PC-9 (cell line): ENCODE measurements at regions of chr12 and their contacts with region 1.

Region 1: GRCh38 chr12:53508534-53509199 is 1.4 kb upstream of the NPFF start:
- DNase-seq: peak; percentile 51 to 81
- H3K4me3 ChIP-seq: no peak overlapping the region
- H3K27ac ChIP-seq: no peak overlapping the region
- H3K4me1 ChIP-seq: no peaks in the 10 kb centered on the region
- H3K27me3 ChIP-seq: no peaks in the 10 kb centered on the region
- CTCF ChIP-seq: peak; percentile 90

Region 2: DNA sequence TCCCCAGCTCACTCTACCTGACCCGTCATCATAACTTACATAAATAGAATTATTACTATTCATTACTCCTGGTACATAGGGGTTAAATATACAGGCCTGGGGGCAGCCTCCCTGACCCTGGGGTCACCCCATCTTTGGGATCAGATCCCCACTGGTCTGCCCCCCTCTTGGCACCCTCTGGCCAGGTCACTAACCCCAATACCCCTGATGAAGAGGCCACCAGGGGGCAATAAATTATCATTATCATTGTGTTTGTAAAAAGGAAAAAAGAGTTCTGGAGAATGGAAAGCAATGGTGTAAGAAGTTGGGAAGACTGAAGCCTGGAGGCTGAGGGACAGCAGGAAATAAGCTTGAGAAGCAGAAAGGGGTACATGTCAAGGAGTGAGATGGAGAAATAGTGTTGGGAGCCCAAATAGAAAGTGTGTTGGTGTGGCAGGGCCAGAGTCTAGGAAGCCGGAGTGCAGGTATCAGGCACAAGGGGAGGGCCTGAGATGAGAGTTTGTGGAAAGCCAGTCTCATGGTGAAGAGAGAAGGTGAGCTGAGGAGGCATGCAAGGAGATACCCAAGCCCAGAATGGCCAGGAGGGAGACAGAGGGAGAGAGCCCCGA is 181.1 kb before region 1 on chr12:
- CTCF ChIA-PET with region 1: interaction called, 3 read pairs
- POLR2A ChIA-PET with region 1: no interaction called
- intact Hi-C with region 1: loop called (anchors 1 kb)
- DNase-seq: no peak
- H3K4me3 ChIP-seq: no peak overlapping the region
- H3K27ac ChIP-seq: no peak overlapping the region
- H3K4me1 ChIP-seq: no peaks in the 10 kb centered on the region; the same call in 1 of the 2 replicates
- H3K27me3 ChIP-seq: 0 out of 2 replicates have a peak, but pooled peaks cover 3% of the 10 kb centered on the region
- CTCF ChIP-seq: peak; percentile 71

Region 3: DNA sequence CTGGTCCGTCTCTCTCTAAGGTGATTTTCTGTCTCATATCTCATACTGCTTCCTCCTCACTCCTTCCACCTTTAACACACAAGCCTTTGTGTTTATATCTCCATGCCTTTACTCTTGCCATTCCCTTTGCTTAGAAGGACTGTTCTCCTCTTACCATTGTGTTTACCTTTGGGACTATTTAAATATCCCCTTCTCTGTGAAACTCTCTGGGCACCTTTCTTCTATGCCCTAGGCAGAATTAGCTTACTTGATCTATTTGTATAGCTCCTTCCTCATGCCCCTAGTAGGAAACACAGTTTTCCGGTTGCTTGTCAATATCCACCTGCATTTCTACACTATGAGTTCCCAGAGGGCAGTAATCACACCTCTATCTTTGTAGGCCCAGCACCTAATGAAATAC is 88.9 kb before region 1 on chr12:
- CTCF ChIA-PET with region 1: interaction called, 11 read pairs
- POLR2A ChIA-PET with region 1: no interaction called
- intact Hi-C with region 1: loop called (anchors 2 kb)
- DNase-seq: peak in 1 of 2 experiments; percentile 68
- H3K4me3 ChIP-seq: no peak overlapping the region
- H3K27ac ChIP-seq: peak overlapping the region; percentile 32
- H3K4me1 ChIP-seq: peaks cover 21% of the 10 kb centered on the region
- H3K27me3 ChIP-seq: no peaks in the 10 kb centered on the region
- CTCF ChIP-seq: no peak

Region 4: GRCh38 chr12:53498235-53498630 is 10.4 kb before region 1 on chr12:
- CTCF ChIA-PET with region 1: no interaction called
- POLR2A ChIA-PET with region 1: no interaction called
- intact Hi-C with region 1: no loop called
- DNase-seq: no peak
- H3K4me3 ChIP-seq: no peak overlapping the region
- H3K27ac ChIP-seq: no peak overlapping the region
- H3K4me1 ChIP-seq: peaks cover 30% of the 10 kb centered on the region
- H3K27me3 ChIP-seq: no peaks in the 10 kb centered on the region
- CTCF ChIP-seq: no peak

Region 5: GRCh38 chr12:53551889-53552291 is 43.2 kb after region 1 on chr12:
- CTCF ChIA-PET with region 1: no interaction called
- POLR2A ChIA-PET with region 1: no interaction called
- intact Hi-C with region 1: no loop called
- DNase-seq: no peak
- H3K4me3 ChIP-seq: no peak overlapping the region
- H3K27ac ChIP-seq: no peak overlapping the region
- H3K4me1 ChIP-seq: no peaks in the 10 kb centered on the region
- H3K27me3 ChIP-seq: no peaks in the 10 kb centered on the region
- CTCF ChIP-seq: no peak